ENCODE measurements at regions of chr12 and their contacts with region 1.

Region 1: DNA sequence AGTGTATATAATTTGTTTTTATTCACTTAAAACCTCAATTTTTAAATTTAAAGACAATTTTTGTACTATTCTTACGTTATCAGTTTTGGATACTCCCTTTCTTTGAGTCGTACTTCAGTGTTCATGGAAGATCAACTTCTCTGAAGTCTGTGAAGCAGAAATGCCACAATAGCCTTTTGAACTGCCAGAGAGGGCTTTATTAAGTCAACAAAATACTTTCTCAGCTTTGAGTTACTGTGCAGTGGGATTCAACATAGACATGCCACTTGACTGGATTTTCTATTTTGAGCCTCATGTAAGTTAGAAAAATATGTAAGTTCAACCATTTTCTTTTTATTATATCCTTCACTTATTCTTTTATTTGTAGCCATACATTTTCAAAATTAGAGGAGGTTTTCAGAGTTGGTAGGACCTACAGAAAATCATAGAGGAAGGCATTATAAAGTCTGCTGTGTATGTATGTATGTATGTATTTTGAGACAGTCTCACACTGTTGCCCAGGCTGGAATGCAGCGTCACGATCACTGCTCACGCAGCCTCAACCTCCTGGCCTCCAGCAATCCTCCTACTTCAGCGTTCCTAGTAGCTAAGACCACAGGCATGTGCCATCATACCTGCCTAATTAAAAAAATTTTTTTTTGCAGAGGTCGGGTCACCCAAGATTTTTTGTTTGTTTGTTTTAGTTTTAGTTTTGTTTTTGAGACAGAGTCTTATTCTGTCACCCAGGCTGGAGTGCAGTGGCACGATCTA is 31.2 kb upstream of the BCAT1 start:
- DNase-seq: no peak
- H3K4me3 ChIP-seq: no peak overlapping the region
- H3K27ac ChIP-seq: no peak overlapping the region
- H3K4me1 ChIP-seq: no peaks in the 10 kb centered on the region
- H3K27me3 ChIP-seq: peaks cover 22% of the 10 kb centered on the region

Region 2: GRCh38 chr12:24649634-24650033 is 330.5 kb before region 1 on chr12:
- in situ Hi-C with region 1: no loop called
- DNase-seq: no peak
- H3K4me3 ChIP-seq: no peak overlapping the region
- H3K27ac ChIP-seq: no peak overlapping the region
- H3K4me1 ChIP-seq: no peaks in the 10 kb centered on the region
- H3K27me3 ChIP-seq: no peaks in the 10 kb centered on the region

Region 3: GRCh38 chr12:25130741-25131188 is 150.6 kb after region 1 on chr12:
- in situ Hi-C with region 1: loop called (anchors 10 kb)
- DNase-seq: peak; percentile 79
- H3K4me3 ChIP-seq: no peak overlapping the region
- H3K27ac ChIP-seq: no peak overlapping the region
- H3K4me1 ChIP-seq: no peaks in the 10 kb centered on the region
- H3K27me3 ChIP-seq: 0 out of 2 replicates have a peak, but pooled peaks cover 4% of the 10 kb centered on the region

Measured in GM23248 (cell line).